Heart right ventricle (tissue), 16 donors: ENCODE measurements at regions of chr19 and their contacts with region 1.

Region 1: GRCh38 chr19:2782936-2783780 is at the start of gene SGTA:
- DNase-seq: peak; percentile 95 to 99
- ATAC-seq: peak; percentile 88 to 95 (median 92)
- H3K4me3 ChIP-seq: peak within 1 kb of the TSS; percentile 79 to 100 (median 96)
- H3K27ac ChIP-seq: peak within 1 kb of the TSS; percentile 68 to 100 (median 96)
- H3K4me1 ChIP-seq: peaks cover 20 to 72% (median 62%) of the 10 kb centered on the region in 9 donors
- H3K27me3 ChIP-seq: no peaks in the 10 kb centered on the region
- CTCF ChIP-seq: peak in 8 of 9 donors; percentile 20 to 66 (median 54)
- total RNA-seq, gene SGTA: 52.6 to 84.9 (median 64.6) TPM

Region 2: DNA sequence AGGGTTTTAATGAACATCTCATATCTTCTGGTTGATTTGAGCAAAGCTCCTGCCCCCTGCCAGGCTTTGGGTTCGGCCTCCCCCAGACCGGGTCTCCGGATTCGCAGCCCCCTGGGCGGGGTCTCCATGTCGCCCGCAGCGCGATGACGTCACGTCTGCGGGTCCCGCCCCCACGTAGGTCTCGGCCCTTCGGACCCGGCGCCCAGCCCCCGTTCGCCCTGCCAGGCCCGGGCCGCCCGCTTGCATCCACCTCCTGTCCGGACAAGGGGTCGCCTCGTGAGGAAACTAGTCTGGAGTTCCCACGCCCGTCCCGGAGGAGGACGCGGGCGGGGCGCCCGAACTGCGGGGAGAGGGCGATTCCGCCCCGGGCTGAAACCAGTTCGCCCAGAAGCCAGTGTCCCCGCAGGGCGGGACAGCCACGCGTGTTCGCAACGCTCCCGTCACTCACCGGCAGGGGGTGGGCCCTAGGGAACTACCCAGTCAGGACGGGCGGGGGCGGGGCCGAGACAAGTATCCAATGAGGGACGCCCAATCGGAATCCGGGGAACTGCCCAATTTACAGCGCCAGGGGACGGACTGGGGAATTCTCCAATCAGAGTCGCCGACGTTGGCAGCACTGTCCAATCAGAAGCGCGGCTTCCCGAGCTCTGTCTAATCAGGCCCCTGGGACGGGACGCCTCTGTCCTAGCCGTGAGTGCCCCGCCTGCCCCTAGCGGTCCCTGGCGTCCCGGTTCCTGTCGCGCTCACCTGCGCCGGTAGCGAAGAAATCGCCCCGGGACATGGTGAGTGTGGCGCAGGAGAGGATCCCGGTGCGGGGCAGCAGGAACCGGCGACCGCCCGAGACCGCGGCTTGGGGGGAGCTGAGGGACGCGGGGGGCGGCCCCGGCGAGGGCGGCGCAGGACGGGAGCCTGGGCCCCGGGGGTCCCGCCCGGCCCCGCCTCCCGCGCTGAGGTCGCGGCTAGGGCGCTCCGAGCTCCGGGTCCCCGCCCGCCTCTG is 57.9 kb after region 1 on chr19 and contains the start of gene ZNF555:
- intact Hi-C with region 1: loop called in 2 of 10 experiments (anchors 1 to 2 kb)
- DNase-seq: peak; percentile 98 to 100
- ATAC-seq: peak; percentile 96 to 99 (median 98)
- H3K4me3 ChIP-seq: peak within 1 kb of the TSS; percentile 46 to 88 (median 72)
- H3K27ac ChIP-seq: peak within 1 kb of the TSS; percentile 88 to 97 (median 91)
- H3K4me1 ChIP-seq: peaks cover 0 to 31% (median 18%) of the 10 kb centered on the region in 9 donors
- H3K27me3 ChIP-seq: no peaks in the 10 kb centered on the region
- CTCF ChIP-seq: peak; percentile 20 to 75 (median 56)
- total RNA-seq, gene ZNF555: 4.9 to 11.3 (median 8.5) TPM